Activated CD8-positive, alpha-beta memory T cell treated with anti-CD3 and anti-CD28 coated beads, Interleukin-2, amount 10 ng/mL, durations not matched to agents 7 days and 5 days (primary cell): ENCODE measurements at regions of chr4 and their contacts with region 1.

Region 1: GRCh38 chr4:147866532-147867271 is 134.8 kb downstream of the ARHGAP10 start:
- DNase-seq: peak; percentile 95
- ATAC-seq: peak; percentile 99
- H3K4me3 Mint-ChIP-seq: no peak overlapping the region
- H3K27ac Mint-ChIP-seq: no peak overlapping the region
- H3K4me1 Mint-ChIP-seq: peaks cover 10% of the 10 kb centered on the region
- H3K27me3 Mint-ChIP-seq: no peaks in the 10 kb centered on the region

Region 2: GRCh38 chr4:147596981-147597380 is 269.7 kb before region 1 on chr4:
- CTCF ChIA-PET with region 1: interaction called, 74 read pairs
- DNase-seq: no peak
- ATAC-seq: no peak
- H3K4me3 Mint-ChIP-seq: no peak overlapping the region
- H3K27ac Mint-ChIP-seq: no peak overlapping the region
- H3K4me1 Mint-ChIP-seq: peaks cover 6% of the 10 kb centered on the region
- H3K27me3 Mint-ChIP-seq: peaks cover 3% of the 10 kb centered on the region

Region 3: GRCh38 chr4:147689067-147689466 is 177.6 kb before region 1 on chr4:
- CTCF ChIA-PET with region 1: interaction called, 28 read pairs
- DNase-seq: peak; percentile 78
- ATAC-seq: peak; percentile 56
- H3K4me3 Mint-ChIP-seq: peak overlapping the region; percentile 34
- H3K27ac Mint-ChIP-seq: peak overlapping the region; percentile 85
- H3K4me1 Mint-ChIP-seq: peaks cover 28% of the 10 kb centered on the region
- H3K27me3 Mint-ChIP-seq: peaks cover 11% of the 10 kb centered on the region

Region 4: DNA sequence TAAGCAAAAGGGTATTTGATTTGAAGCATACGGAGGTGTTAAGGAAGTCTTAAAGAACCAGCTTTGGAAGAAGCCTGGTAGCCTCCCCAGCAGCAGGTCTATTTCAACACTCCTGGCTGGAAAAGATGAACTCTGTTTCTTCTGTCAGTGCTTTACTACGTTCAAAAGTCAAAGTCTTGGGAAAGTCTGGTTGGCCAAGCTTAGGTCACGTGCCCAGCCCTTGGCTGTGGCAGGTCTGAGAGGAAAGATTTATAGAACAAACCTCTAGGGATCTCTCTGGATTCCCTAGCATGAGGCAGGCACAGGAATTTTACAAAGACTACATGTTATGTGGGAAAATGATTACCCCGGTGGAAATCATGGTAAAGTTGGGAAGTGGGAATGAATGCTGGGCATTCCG is 143.4 kb before region 1 on chr4:
- CTCF ChIA-PET with region 1: interaction called, 14 read pairs
- DNase-seq: no peak
- ATAC-seq: no peak
- H3K4me3 Mint-ChIP-seq: no peak overlapping the region
- H3K27ac Mint-ChIP-seq: no peak overlapping the region
- H3K4me1 Mint-ChIP-seq: no peaks in the 10 kb centered on the region
- H3K27me3 Mint-ChIP-seq: peaks cover 11% of the 10 kb centered on the region

Region 5: DNA sequence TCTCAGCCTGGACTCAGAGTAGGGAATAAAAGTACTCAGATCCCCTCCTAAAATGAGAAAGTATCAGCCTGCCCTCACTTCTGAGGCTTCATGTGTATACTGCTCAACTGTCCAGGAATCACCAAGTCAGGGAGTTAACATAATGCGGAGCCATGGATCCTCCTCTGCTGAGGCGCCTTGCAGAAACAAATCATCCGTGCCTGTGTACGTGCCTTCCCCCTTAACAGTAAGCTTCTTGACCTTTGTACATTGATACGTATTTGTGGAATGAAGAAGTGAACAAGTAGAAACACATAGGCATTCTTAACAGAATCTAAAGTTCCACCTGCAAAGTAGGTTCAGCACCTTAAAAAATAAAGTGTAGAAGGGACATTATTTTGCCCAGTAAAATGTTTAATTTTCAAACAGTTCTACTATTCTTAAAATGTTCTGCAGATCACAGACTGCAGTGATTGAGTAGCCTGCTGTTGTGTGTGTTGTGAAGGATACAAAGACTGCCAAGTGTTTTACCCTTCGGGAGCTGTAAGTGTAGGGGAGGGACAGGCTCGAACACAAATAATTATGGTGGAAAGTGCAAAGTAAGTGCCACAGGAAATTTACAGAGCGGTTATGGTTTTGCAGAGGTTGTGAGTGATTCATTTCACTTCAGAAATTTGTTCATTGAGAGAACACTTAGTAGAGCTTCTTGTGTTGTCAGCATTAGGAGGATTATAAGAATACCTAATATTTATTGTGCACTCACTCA is 73.0 kb before region 1 on chr4:
- CTCF ChIA-PET with region 1: interaction called, 16 read pairs
- DNase-seq: peak; percentile 61
- ATAC-seq: peak; percentile 73
- H3K4me3 Mint-ChIP-seq: peak overlapping the region; percentile 14
- H3K27ac Mint-ChIP-seq: peak overlapping the region; percentile 85
- H3K4me1 Mint-ChIP-seq: peaks cover 51% of the 10 kb centered on the region
- H3K27me3 Mint-ChIP-seq: peaks cover 3% of the 10 kb centered on the region

Region 6: GRCh38 chr4:147879676-147880075 is 13.0 kb after region 1 on chr4:
- CTCF ChIA-PET with region 1: interaction called, 21 read pairs
- DNase-seq: no peak
- ATAC-seq: no peak
- H3K4me3 Mint-ChIP-seq: no peak overlapping the region
- H3K27ac Mint-ChIP-seq: no peak overlapping the region
- H3K4me1 Mint-ChIP-seq: no peaks in the 10 kb centered on the region
- H3K27me3 Mint-ChIP-seq: no peaks in the 10 kb centered on the region

Region 7: GRCh38 chr4:147916351-147916750 is 49.6 kb after region 1 on chr4:
- CTCF ChIA-PET with region 1: no interaction called
- DNase-seq: no peak
- ATAC-seq: no peak
- H3K4me3 Mint-ChIP-seq: no peak overlapping the region
- H3K27ac Mint-ChIP-seq: no peak overlapping the region
- H3K4me1 Mint-ChIP-seq: no peaks in the 10 kb centered on the region
- H3K27me3 Mint-ChIP-seq: no peaks in the 10 kb centered on the region